Mammary epithelial cell (primary cell): ENCODE measurements at regions of chr2 and their contacts with region 1.

Region 1: GRCh38 chr2:129396980-129397599 is 582.4 kb upstream of the RAB6C start:
- DNase-seq: peak; percentile 42
- H3K4me3 ChIP-seq: no peak overlapping the region
- H3K27ac ChIP-seq: no peak overlapping the region
- H3K4me1 ChIP-seq: no peaks in the 10 kb centered on the region
- H3K27me3 ChIP-seq: no peaks in the 10 kb centered on the region
- CTCF ChIP-seq: peak; percentile 77 to 93

Region 2: DNA sequence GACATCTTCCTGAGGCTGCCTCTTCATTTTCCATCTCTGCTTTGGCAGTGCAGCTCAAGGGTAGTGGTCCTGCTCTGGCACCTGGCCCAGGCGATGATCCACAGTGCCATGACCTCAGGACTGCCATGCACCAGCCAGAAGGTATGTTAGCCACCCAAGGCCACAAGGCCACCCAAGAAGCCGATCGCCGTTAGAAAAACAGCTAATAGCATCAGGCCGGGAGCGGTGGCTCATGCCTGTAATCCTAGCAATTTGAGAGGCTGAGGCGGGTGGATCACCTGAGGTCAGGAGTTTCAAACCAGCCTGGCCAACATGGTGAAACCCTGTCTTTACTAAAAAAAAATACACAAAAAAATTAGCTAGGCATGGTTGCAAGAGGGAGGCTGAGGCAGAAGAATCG is 1334.5 kb before region 1 on chr2:
- CTCF ChIA-PET with region 1: no interaction called
- dilution Hi-C with region 1: no loop called
- in situ Hi-C with region 1: no loop called
- intact Hi-C with region 1: loop called (anchors 1 kb)
- DNase-seq: no peak
- H3K4me3 ChIP-seq: no peak overlapping the region
- H3K27ac ChIP-seq: no peak overlapping the region
- H3K4me1 ChIP-seq: no peaks in the 10 kb centered on the region
- H3K27me3 ChIP-seq: no peaks in the 10 kb centered on the region
- CTCF ChIP-seq: no peak

Region 3: DNA sequence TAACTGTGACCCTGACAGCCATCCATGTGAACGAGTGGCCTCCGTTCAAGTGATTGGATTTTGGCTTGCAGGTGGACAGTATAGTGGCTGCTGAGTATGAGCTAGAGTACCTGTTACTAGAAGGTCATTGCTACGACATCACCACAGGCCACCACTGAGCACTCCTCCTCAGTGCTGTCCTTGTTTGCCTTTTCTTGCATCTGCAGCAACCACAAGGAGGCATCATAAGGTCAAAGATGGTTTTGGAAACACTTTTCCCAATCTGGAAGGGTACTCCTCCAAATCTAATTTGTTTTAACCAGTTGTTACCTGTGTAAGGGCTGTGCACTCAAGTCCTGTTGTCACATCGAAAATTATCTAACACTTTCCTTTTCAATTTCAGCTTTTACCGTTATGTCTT is 1224.9 kb before region 1 on chr2:
- CTCF ChIA-PET with region 1: no interaction called
- dilution Hi-C with region 1: no loop called
- in situ Hi-C with region 1: no loop called
- intact Hi-C with region 1: loop called (anchors 2 kb)
- DNase-seq: no peak
- H3K4me3 ChIP-seq: no peak overlapping the region
- H3K27ac ChIP-seq: no peak overlapping the region
- H3K4me1 ChIP-seq: no peaks in the 10 kb centered on the region
- H3K27me3 ChIP-seq: no peaks in the 10 kb centered on the region
- CTCF ChIP-seq: peak in 1 of 2 donors; percentile 34

Region 4: GRCh38 chr2:128736689-128737545 is 660.2 kb before region 1 on chr2:
- CTCF ChIA-PET with region 1: no interaction called
- dilution Hi-C with region 1: no loop called
- in situ Hi-C with region 1: loop called in 1 of 2 experiments (anchors 25 kb)
- intact Hi-C with region 1: loop called (anchors 1 kb)
- DNase-seq: peak; percentile 49
- H3K4me3 ChIP-seq: peak overlapping the region in 2 of 3 experiments; percentile 28 to 45
- H3K27ac ChIP-seq: no peak overlapping the region
- H3K4me1 ChIP-seq: peaks cover 13% of the 10 kb centered on the region
- H3K27me3 ChIP-seq: no peaks in the 10 kb centered on the region
- CTCF ChIP-seq: peak; percentile 90 to 100

Region 5: GRCh38 chr2:129605646-129606045 is 208.6 kb after region 1 on chr2:
- CTCF ChIA-PET with region 1: no interaction called
- dilution Hi-C with region 1: no loop called
- in situ Hi-C with region 1: no loop called
- intact Hi-C with region 1: no loop called
- DNase-seq: no peak
- H3K4me3 ChIP-seq: no peak overlapping the region
- H3K27ac ChIP-seq: no peak overlapping the region
- H3K4me1 ChIP-seq: no peaks in the 10 kb centered on the region
- H3K27me3 ChIP-seq: no peaks in the 10 kb centered on the region
- CTCF ChIP-seq: no peak

Region 6: GRCh38 chr2:129849559-129850160 is 452.6 kb after region 1 on chr2:
- CTCF ChIA-PET with region 1: no interaction called
- dilution Hi-C with region 1: no loop called
- in situ Hi-C with region 1: no loop called
- intact Hi-C with region 1: loop called (anchors 5 kb)
- DNase-seq: peak; percentile 50
- H3K4me3 ChIP-seq: no peak overlapping the region
- H3K27ac ChIP-seq: no peak overlapping the region
- H3K4me1 ChIP-seq: no peaks in the 10 kb centered on the region
- H3K27me3 ChIP-seq: no peaks in the 10 kb centered on the region
- CTCF ChIP-seq: peak; percentile 63 to 75

Region 7: GRCh38 chr2:129923265-129924091 is 526.4 kb after region 1 on chr2:
- CTCF ChIA-PET with region 1: no interaction called
- dilution Hi-C with region 1: no loop called
- in situ Hi-C with region 1: no loop called
- intact Hi-C with region 1: loop called (anchors 2 kb)
- DNase-seq: peak; percentile 25
- H3K4me3 ChIP-seq: no peak overlapping the region
- H3K27ac ChIP-seq: no peak overlapping the region
- H3K4me1 ChIP-seq: no peaks in the 10 kb centered on the region
- H3K27me3 ChIP-seq: peaks cover 6% of the 10 kb centered on the region
- CTCF ChIP-seq: peak; percentile 53 to 56